IMR-90 (cell line): ENCODE measurements at regions of chr6 and their contacts with region 1.

Region 1: GRCh38 chr6:124961777-124962611 is at the start of gene RNF217:
- DNase-seq: peak; percentile 76
- ATAC-seq: peak; percentile 54
- H3K4me3 ChIP-seq: peak within 1 kb of the TSS; percentile 83
- H3K27ac ChIP-seq: peak within 1 kb of the TSS; percentile 94
- H3K4me1 ChIP-seq: peaks cover 4% of the 10 kb centered on the region; the same call in 1 of the 2 replicates
- H3K27me3 ChIP-seq: no peaks in the 10 kb centered on the region
- CTCF ChIP-seq: 0 out of 2 replicates have a peak, but pooled peaks have one; percentile 17
- POLR2A ChIP-seq: peak; percentile 54
- RAD21 ChIP-seq: no peak
- total RNA-seq, gene RNF217: 16.7 and 20.4 TPM in 2 replicates

Region 2: GRCh38 chr6:125013938-125014660 is 52.1 kb after region 1 on chr6:
- CTCF ChIA-PET with region 1: no interaction called
- POLR2A ChIA-PET with region 1: no interaction called
- dilution Hi-C with region 1: no loop called
- in situ Hi-C with region 1: no loop called
- intact Hi-C with region 1: loop called (anchors 2 kb)
- DNase-seq: peak; percentile 89
- ATAC-seq: peak; percentile 76
- H3K4me3 ChIP-seq: no peak overlapping the region
- H3K27ac ChIP-seq: peak overlapping the region; percentile 100
- H3K4me1 ChIP-seq: peaks cover 17% of the 10 kb centered on the region
- H3K27me3 ChIP-seq: no peaks in the 10 kb centered on the region
- CTCF ChIP-seq: no peak
- POLR2A ChIP-seq: no peak
- RAD21 ChIP-seq: no peak

Region 3: DNA sequence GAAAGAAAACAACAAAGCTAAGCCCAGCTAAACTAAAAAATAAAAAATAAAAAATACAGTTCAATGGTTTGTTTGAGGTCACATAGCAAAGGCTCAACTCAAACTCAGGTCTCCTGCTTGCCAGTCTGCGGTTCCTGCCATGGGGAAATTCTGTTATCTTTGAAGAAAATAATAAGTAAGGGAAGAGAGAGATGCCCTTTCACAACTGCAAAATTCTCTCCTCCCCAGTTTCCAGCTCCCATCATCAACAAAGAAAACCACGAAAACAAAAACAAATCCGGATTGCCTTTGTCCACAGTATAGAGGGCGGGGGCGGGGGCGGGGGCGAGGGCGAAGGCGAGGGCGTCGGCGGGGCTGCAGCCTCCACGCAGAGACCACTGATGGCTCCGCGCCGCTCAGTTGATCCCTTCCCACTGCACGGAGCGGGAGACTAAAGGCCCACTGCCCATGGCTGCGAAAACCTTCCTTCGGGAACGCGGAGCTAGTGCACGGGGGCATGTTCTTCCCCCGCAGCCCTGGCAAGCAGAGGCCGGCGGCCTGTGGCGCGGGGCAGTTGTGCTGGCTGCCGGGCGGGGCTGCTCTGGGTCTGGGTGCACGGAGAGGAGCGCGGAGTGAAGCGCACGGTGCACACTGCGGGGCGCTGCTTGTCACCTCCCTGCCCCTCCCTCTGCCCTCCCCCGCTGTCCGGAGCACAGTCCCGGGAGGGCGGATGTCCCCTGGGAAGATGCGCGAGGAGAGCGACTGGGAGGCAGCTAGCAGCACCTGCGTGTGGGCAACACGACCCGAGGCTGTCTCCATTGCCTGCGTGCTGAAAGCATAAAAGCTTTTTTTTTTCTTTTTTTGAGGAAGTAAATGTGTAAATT is 137.4 kb after region 1 on chr6:
- CTCF ChIA-PET with region 1: interaction called, 3 read pairs
- POLR2A ChIA-PET with region 1: interaction called, 10 read pairs
- dilution Hi-C with region 1: no loop called
- in situ Hi-C with region 1: loop called (anchors 25 kb)
- intact Hi-C with region 1: loop called (anchors 1 kb)
- DNase-seq: peak; percentile 50
- ATAC-seq: peak; percentile 55
- H3K4me3 ChIP-seq: peak overlapping the region; percentile 54
- H3K27ac ChIP-seq: peak overlapping the region; percentile 93
- H3K4me1 ChIP-seq: peaks cover 35% of the 10 kb centered on the region
- H3K27me3 ChIP-seq: no peaks in the 10 kb centered on the region
- CTCF ChIP-seq: no peak
- POLR2A ChIP-seq: no peak
- RAD21 ChIP-seq: no peak

Region 4: DNA sequence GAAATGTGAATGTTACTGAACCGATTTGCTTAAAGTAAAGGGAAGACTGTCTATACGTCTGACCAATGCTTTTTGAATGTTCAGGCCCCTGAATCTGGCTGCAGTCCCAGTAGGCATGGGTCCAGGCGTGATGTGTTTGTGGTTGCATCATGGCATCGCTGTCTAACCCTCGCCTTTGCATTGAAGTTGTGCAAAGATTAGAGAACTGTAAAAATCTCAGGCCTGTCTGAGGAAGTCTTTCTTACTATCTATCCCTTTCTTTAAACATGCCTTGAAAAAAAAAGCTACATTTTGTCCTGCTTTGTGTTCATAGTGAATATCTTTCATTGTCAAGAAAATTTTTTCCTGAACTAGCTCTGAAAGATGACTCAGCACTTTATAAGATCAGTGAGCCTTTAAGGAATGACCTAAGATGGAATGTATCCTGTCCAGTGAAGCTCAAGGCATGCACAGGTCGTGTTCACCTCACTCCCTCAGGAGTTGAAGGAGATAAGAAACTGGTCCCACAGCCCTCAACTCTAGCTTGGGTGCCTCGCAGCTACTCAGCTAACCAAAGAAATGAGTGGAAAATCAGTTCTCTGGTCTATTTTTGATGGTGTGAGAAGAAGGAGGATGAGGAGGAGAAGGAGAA is 240.1 kb after region 1 on chr6:
- CTCF ChIA-PET with region 1: no interaction called
- POLR2A ChIA-PET with region 1: no interaction called
- dilution Hi-C with region 1: no loop called
- in situ Hi-C with region 1: no loop called
- intact Hi-C with region 1: loop called (anchors 5 kb)
- DNase-seq: peak; percentile 94
- ATAC-seq: peak; percentile 77
- H3K4me3 ChIP-seq: no peak overlapping the region
- H3K27ac ChIP-seq: peak overlapping the region; percentile 99
- H3K4me1 ChIP-seq: peaks cover 13% of the 10 kb centered on the region
- H3K27me3 ChIP-seq: no peaks in the 10 kb centered on the region
- CTCF ChIP-seq: no peak
- POLR2A ChIP-seq: no peak
- RAD21 ChIP-seq: no peak